ENCODE measurements at regions of chrX and their contacts with region 1.

Region 1: DNA sequence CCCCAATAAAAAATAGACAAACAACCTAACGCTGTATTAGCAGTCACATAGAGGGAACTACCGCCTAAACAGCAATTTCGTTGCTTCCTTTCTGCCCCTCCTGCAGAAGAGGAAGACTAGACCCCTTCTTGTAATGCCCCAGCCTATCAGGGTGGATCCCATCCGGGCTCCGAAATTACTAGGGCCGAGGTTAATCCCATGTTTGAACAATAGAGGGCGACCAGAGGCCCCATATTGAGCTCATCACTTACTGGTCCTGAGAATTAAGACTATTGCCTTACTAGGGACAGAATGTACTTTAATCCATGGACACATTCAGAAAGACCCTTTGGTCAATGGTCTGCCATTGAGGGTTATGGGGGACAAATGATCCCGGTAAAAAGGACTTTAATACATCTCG is 11.8 kb upstream of the ZNF630 start:
- DNase-seq: peak in 4 of 5 donors; percentile 38 to 49 (median 40)
- H3K4me3 ChIP-seq: no peak overlapping the region
- H3K4me3 Mint-ChIP-seq: no peak overlapping the region
- H3K27ac ChIP-seq: no peak overlapping the region
- H3K27ac Mint-ChIP-seq: no peak overlapping the region
- H3K4me1 ChIP-seq: no peaks in the 10 kb centered on the region
- H3K4me1 Mint-ChIP-seq: no peaks in the 10 kb centered on the region
- H3K27me3 ChIP-seq: no peaks in the 10 kb centered on the region
- H3K27me3 Mint-ChIP-seq: no peaks in the 10 kb centered on the region

Region 2: DNA sequence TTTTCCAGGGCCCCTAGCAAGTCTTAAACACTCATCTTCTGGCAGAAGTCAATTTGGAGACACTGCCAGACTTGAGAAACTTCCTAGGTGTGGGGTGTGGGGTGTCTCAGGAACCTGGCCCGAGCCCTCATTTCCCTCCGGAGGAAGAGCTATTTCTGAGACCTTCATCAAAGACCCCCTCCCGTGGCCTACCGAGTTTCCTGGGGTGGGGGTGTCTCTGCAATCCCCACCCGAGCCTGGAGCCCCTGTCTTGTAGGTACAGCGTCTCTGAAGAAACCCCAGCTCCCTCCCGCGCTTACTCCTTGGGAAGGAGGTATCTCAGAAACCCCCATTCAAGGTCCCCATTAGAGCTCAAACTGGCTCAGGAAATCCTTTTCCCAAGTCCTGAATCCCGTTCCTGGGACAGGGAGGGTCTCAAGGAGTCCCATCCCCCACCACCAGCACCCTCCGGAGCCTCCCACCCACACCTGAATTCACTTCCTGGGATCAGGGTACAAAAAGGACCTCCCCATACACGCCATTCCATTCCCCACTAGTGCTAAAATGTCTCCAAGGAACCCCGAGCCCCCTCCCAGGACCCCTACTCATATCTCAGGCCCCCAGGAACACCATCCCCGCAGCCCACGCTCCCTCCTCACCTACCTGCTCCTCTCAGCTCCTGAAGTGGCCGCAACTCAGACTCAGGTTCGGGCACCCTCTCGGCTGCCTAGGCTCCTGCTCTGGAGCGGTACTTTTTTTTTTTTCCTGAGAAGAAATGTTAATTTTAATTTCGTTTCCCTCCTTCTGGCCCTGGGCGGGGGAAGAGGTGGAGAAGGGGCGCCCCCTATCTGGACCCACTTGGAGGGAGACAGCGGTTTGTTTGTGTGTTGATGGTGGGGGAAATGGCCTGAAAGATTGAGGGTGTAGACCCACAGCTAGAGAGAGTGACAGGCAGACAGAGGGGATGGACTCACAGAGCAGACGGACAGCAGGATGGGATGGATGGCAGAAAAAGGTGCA is 385.8 kb after region 1 on chrX:
- CTCF ChIA-PET with region 1: interaction called, 34 read pairs
- POLR2A ChIA-PET with region 1: interaction called, 5 read pairs
- intact Hi-C with region 1: loop called (anchors 1 kb)
- DNase-seq: peak in 4 of 5 donors; percentile 27 to 42 (median 32)
- H3K4me3 ChIP-seq: peak overlapping the region; percentile 57 to 58
- H3K4me3 Mint-ChIP-seq: peak overlapping the region; percentile 82 to 95 (median 90)
- H3K27ac ChIP-seq: peak overlapping the region; percentile 72
- H3K27ac Mint-ChIP-seq: peak overlapping the region; percentile 62 to 95 (median 88)
- H3K4me1 ChIP-seq: peaks cover 12% of the 10 kb centered on the region
- H3K4me1 Mint-ChIP-seq: peaks cover 8 to 39% (median 22%) of the 10 kb centered on the region in 4 donors
- H3K27me3 ChIP-seq: no peaks in the 10 kb centered on the region
- H3K27me3 Mint-ChIP-seq: no peaks in the 10 kb centered on the region

Measured in CD4-positive, alpha-beta memory T cell (primary cell).